Activated CD4-positive, alpha-beta T cell treated with anti-CD3 and anti-CD28 coated beads, Interleukin-2, amount 10 ng/mL, durations not matched to agents 24 days and 14 days (primary cell): ENCODE measurements at regions of chr11 and their contacts with region 1.

Region 1: GRCh38 chr11:128379587-128380580 is 207.5 kb downstream of the ETS1 start:
- DNase-seq: peak; percentile 68
- H3K4me3 Mint-ChIP-seq: no peak overlapping the region
- H3K27ac Mint-ChIP-seq: peak overlapping the region; percentile 72
- H3K4me1 Mint-ChIP-seq: peaks cover 24% of the 10 kb centered on the region
- H3K27me3 Mint-ChIP-seq: no peaks in the 10 kb centered on the region

Region 2: GRCh38 chr11:128157423-128158298 is 222.2 kb before region 1 on chr11:
- intact Hi-C with region 1: no loop called
- DNase-seq: peak; percentile 90
- H3K4me3 Mint-ChIP-seq: peak overlapping the region; percentile 63
- H3K27ac Mint-ChIP-seq: peak overlapping the region; percentile 78
- H3K4me1 Mint-ChIP-seq: peaks cover 10% of the 10 kb centered on the region
- H3K27me3 Mint-ChIP-seq: peaks cover 3% of the 10 kb centered on the region

Region 3: GRCh38 chr11:128311742-128312719 is 67.9 kb before region 1 on chr11:
- intact Hi-C with region 1: no loop called
- DNase-seq: peak; percentile 65
- H3K4me3 Mint-ChIP-seq: peak overlapping the region; percentile 42
- H3K27ac Mint-ChIP-seq: peak overlapping the region; percentile 88
- H3K4me1 Mint-ChIP-seq: peaks cover 57% of the 10 kb centered on the region
- H3K27me3 Mint-ChIP-seq: no peaks in the 10 kb centered on the region

Region 4: GRCh38 chr11:128422576-128423370 is 42.9 kb after region 1 on chr11:
- intact Hi-C with region 1: loop called (anchors 5 kb)
- DNase-seq: peak; percentile 89
- H3K4me3 Mint-ChIP-seq: peak overlapping the region; percentile 65
- H3K27ac Mint-ChIP-seq: peak overlapping the region; percentile 96
- H3K4me1 Mint-ChIP-seq: peaks cover 24% of the 10 kb centered on the region
- H3K27me3 Mint-ChIP-seq: no peaks in the 10 kb centered on the region